ENCODE measurements at regions of chr1 and their contacts with region 1.

Region 1: GRCh38 chr1:28877132-28877781 is 37.1 kb upstream of the EPB41 start:
- DNase-seq: peak; percentile 56 to 96 (median 82)

Region 2: GRCh38 chr1:28359592-28360239 is 517.5 kb before region 1 on chr1:
- intact Hi-C with region 1: loop called (anchors 2 kb)
- DNase-seq: peak; percentile 19 to 93 (median 72)

Region 3: DNA sequence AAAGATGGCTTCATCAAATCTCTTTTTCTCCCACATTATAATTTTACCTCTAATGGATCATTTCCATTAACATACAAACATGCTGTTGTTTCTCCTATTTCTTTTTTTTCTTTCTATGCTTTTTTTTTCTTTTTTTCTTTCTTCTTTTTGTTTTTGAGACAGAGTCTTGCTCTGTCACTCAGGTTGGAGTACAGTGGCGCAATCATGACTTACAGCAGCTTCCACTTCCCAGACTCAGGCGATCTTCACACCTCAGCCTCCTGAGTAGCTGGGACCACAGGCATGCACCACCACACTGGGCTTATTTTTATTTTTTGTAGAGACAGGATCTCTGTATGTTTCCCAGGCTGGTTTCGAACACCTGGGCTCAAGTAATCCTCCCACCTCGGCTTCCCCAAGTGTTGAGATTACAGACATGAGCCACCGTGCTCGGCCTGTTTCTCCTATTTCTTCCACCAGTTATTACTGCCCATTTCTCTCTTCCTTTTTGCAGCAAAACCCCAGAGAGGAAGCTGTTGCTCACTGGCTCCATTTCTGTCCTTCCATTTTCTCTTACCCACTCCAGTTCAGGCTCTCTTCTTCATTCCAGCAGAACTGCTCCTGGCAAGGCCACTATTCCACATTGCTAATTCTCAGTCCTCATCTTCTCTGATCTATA is 97.4 kb before region 1 on chr1:
- intact Hi-C with region 1: loop called (anchors 1 kb)
- DNase-seq: peak in 1 of 10 donors; percentile 15

Region 4: DNA sequence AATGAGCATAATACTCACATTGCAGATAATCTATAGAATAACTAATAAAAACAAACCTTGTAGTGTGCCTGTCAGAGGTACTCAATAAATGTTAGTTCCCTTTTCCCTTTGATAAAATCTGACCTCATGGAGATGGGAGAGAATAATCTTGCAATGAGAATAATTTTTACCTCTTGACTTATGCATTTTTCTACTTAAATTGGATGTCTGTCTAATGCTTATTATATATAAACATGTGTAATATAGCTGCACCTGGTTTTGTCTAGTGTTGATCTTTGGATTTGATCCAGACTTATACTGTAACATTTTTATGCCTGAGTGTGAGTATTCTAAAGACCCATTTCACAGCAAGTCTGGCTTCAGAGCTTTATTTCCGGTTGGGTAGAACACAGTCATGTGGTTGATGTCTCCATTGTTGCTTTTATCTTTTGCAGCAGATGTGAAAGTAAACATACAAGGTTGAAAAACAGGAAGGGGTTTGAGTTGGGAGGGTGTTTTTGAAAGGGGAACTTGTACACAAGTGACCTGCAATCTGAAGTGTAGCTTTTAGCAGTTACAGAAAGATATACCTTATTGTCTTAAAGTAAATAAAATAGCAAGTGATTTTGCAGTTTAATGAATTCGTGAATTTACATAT is 49.5 kb after region 1 on chr1:
- intact Hi-C with region 1: no loop called
- DNase-seq: no peak

Region 5: GRCh38 chr1:29181413-29182225 is 304.4 kb after region 1 on chr1 and contains the start of gene SRSF4:
- intact Hi-C with region 1: loop called (anchors 5 kb)
- DNase-seq: peak; percentile 94 to 100 (median 98)

Region 6: GRCh38 chr1:30713311-30713710 is 1836.1 kb after region 1 on chr1:
- intact Hi-C with region 1: loop called (anchors 5 kb)
- DNase-seq: no peak

Measured in posterior cingulate gyrus (tissue), 11 donors.